ENCODE measurements at regions of chr9 and their contacts with region 1.

Region 1: GRCh38 chr9:137240861-137241489 is at the start of gene TUBB4B:
- DNase-seq: peak; percentile 93 to 100 (median 98)
- ATAC-seq: peak; percentile 79
- H3K4me3 ChIP-seq: peak within 1 kb of the TSS; percentile 68
- H3K4me3 Mint-ChIP-seq: peak within 1 kb of the TSS; percentile 91
- H3K27ac ChIP-seq: peak within 1 kb of the TSS; percentile 64 to 84
- H3K27ac Mint-ChIP-seq: peak within 1 kb of the TSS; percentile 89
- H3K4me1 ChIP-seq: peaks cover 64% of the 10 kb centered on the region
- H3K4me1 Mint-ChIP-seq: peaks cover 17% of the 10 kb centered on the region
- H3K27me3 ChIP-seq: no peaks in the 10 kb centered on the region
- H3K27me3 Mint-ChIP-seq: no peaks in the 10 kb centered on the region
- CTCF ChIP-seq: no peak
- total RNA-seq, gene TUBB4B: 93.8 to 98.2 TPM

Region 2: DNA sequence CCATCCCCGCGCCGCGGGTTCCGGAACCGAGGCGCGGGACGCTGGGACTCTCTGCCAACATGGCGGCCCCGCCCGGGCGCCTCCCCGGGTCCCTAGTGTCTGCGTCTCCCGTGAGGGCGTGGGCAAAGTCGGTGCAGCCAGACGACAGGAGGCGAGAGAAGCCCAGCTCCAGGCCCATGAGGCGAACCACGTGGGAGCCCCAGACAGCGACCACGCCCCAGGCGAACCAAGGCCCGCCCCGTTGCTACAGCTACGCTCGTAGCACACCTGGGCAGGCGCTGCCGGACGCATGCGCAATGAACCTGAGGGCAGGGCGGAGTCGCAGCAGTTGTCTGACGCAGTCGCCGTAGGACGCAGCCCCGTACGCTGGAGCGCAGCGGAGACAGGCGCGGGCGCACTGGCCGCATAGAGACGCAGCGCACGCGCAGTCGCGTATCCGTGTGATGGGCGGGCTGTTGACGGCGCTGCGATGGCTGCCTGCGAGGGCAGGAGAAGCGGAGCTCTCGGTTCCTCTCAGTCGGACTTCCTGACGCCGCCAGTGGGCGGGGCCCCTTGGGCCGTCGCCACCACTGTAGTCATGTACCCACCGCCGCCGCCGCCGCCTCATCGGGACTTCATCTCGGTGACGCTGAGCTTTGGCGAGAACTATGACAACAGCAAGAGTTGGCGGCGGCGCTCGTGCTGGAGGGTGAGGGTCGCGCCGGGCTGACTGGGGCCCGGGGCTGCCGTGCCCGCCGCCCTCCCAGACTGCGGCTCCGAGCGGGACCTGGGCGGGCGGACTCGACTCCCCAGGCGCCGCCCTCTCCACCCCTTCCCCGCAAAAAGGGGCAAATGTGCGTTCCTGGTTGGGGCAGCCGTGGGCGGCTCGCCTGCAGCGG is 154.2 kb before region 1 on chr9 and contains the start of gene MAN1B1:
- CTCF ChIA-PET with region 1: interaction called, 7 read pairs
- POLR2A ChIA-PET with region 1: interaction called, 28 read pairs
- intact Hi-C with region 1: no loop called
- DNase-seq: peak; percentile 98 to 100 (median 100)
- ATAC-seq: peak; percentile 79
- H3K4me3 ChIP-seq: peak within 1 kb of the TSS; percentile 71
- H3K4me3 Mint-ChIP-seq: peak within 1 kb of the TSS; percentile 93
- H3K27ac ChIP-seq: peak within 1 kb of the TSS; percentile 79 to 90
- H3K27ac Mint-ChIP-seq: peak within 1 kb of the TSS; percentile 89
- H3K4me1 ChIP-seq: peaks cover 22% of the 10 kb centered on the region
- H3K4me1 Mint-ChIP-seq: peaks cover 32% of the 10 kb centered on the region
- H3K27me3 ChIP-seq: no peaks in the 10 kb centered on the region
- H3K27me3 Mint-ChIP-seq: no peaks in the 10 kb centered on the region
- CTCF ChIP-seq: no peak
- total RNA-seq, gene MAN1B1: 60.9 to 66.9 TPM

Region 3: DNA sequence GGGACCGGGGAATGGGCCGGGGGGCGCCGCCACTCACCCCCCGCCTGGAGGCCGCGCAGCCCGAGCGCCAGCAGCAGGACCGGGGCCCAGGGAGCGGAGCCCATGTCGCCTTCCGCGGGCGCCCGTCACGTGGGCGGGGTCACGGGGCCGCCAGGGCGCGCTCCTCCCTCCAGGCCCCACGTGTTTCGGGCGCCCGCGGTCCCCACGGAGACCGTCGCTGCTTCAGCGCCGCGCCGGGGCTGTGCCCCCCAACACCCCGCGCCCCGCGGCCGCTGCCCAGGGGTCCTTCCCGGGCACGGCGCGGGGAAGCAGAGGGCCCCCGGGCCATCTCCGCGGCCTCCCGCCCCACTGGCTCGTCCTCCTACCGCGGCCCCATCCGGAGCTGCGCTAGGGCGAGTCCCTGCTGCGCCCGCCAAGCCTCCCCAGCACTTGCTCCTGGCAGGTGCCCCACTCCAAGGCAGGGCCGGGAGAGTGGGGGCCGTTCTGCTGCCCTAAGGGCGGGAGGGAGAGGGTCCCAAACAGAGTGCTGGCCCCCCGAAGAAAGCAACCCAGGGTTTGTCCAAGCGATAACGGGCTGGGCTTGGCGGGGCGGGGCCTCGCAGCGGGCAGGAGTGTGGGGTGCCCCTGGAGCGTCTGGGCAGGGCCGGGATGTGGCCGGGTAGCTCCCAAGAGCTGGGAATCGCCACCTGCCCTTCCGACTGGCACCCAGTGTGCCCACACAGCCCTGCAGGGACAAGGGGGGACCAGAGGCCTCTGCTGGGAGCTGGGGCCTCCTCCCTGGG is 126.2 kb before region 1 on chr9 and contains the start of gene DPP7:
- CTCF ChIA-PET with region 1: interaction called, 7 read pairs
- POLR2A ChIA-PET with region 1: interaction called, 10 read pairs
- intact Hi-C with region 1: loop called in 1 of 2 experiments (anchors 5 kb)
- DNase-seq: peak; percentile 58 to 92 (median 76)
- ATAC-seq: peak; percentile 94
- H3K4me3 ChIP-seq: peak within 1 kb of the TSS; percentile 54
- H3K4me3 Mint-ChIP-seq: peak within 1 kb of the TSS; percentile 79
- H3K27ac ChIP-seq: peak within 1 kb of the TSS in 1 of 2 donors; percentile 46
- H3K27ac Mint-ChIP-seq: peak within 1 kb of the TSS; percentile 44
- H3K4me1 ChIP-seq: peaks cover 28% of the 10 kb centered on the region
- H3K4me1 Mint-ChIP-seq: no peaks in the 10 kb centered on the region
- H3K27me3 ChIP-seq: no peaks in the 10 kb centered on the region
- H3K27me3 Mint-ChIP-seq: no peaks in the 10 kb centered on the region
- CTCF ChIP-seq: no peak
- total RNA-seq, gene DPP7: 344 to 349 TPM

Region 4: DNA sequence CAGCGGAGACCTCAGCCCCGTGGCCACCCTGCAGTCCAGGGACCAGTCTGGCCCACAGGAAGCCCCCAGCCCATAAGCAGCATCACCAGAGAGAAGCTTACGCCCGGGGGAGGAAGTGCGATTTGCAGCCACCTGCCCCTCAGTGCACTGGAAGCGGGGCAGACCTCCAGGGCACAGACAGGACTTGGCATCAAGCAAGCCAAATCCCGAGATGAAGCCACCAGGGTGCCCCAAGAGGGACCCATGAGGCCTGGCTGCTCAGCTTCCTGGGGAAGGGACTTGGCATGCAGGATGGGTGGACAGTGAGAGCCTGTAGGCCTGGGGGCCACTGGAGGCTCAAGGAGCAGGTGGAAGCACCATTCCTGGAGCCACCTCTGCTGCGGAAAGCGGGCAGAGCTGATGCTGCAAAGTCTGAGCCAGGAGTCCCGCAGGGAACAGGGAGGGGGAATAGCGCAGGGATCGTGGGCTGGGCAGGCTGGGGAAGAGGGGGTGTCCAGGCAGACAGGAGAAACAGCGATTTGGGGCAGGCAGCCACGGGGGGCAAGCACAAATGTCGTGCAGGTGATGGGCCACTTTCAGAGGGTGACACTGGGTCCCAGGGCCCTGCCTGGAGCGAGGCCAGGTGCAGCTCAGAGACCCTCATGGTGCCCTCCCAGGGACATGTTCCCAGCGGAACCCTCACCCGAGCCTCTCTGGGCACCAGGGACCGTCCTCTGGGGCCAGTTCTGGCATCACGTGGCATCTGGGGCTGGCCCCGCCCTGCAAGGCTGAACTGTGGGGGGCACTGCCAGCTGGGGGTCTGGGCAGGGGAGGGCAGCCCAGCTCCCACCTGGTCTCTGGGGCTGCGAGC is 74.4 kb before region 1 on chr9:
- CTCF ChIA-PET with region 1: no interaction called
- POLR2A ChIA-PET with region 1: no interaction called
- intact Hi-C with region 1: no loop called
- DNase-seq: no peak
- ATAC-seq: no peak
- H3K4me3 ChIP-seq: no peak overlapping the region
- H3K4me3 Mint-ChIP-seq: peak overlapping the region; percentile 15
- H3K27ac ChIP-seq: no peak overlapping the region
- H3K27ac Mint-ChIP-seq: no peak overlapping the region
- H3K4me1 ChIP-seq: peaks cover 13% of the 10 kb centered on the region
- H3K4me1 Mint-ChIP-seq: no peaks in the 10 kb centered on the region
- H3K27me3 ChIP-seq: peaks cover 59 to 82% of the 10 kb centered on the region in 2 experiments
- H3K27me3 Mint-ChIP-seq: peaks cover 53% of the 10 kb centered on the region
- CTCF ChIP-seq: no peak

Region 5: GRCh38 chr9:137188490-137189296 is 52.3 kb before region 1 on chr9 and contains the starts of genes ANAPC2 and SSNA1:
- CTCF ChIA-PET with region 1: interaction called, 7 read pairs
- POLR2A ChIA-PET with region 1: interaction called, 17 read pairs
- intact Hi-C with region 1: loop called in 1 of 2 experiments (anchors 5 kb)
- DNase-seq: peak; percentile 83 to 98 (median 90)
- ATAC-seq: peak; percentile 79
- H3K4me3 ChIP-seq: peak within 1 kb of the TSS; percentile 100
- H3K4me3 Mint-ChIP-seq: peak within 1 kb of the TSS; percentile 94
- H3K27ac ChIP-seq: peak within 1 kb of the TSS; percentile 86 to 92
- H3K27ac Mint-ChIP-seq: peak within 1 kb of the TSS; percentile 79
- H3K4me1 ChIP-seq: peaks cover 50% of the 10 kb centered on the region
- H3K4me1 Mint-ChIP-seq: peaks cover 29% of the 10 kb centered on the region
- H3K27me3 ChIP-seq: no peaks in the 10 kb centered on the region
- H3K27me3 Mint-ChIP-seq: no peaks in the 10 kb centered on the region
- CTCF ChIP-seq: peak; percentile 48
- total RNA-seq, gene ANAPC2: 144 to 149 TPM
- total RNA-seq, gene SSNA1: 30.1 to 30.5 TPM

Region 6: GRCh38 chr9:137223078-137223970 is 17.7 kb before region 1 on chr9:
- CTCF ChIA-PET with region 1: interaction called, 15 read pairs
- POLR2A ChIA-PET with region 1: interaction called, 29 read pairs
- intact Hi-C with region 1: loop called in 1 of 2 experiments (anchors 1 kb)
- DNase-seq: peak; percentile 94 to 100 (median 98)
- ATAC-seq: peak; percentile 94
- H3K4me3 ChIP-seq: peak overlapping the region; percentile 74
- H3K4me3 Mint-ChIP-seq: peak overlapping the region; percentile 87
- H3K27ac ChIP-seq: peak overlapping the region; percentile 74 to 80
- H3K27ac Mint-ChIP-seq: peak overlapping the region; percentile 81
- H3K4me1 ChIP-seq: peaks cover 36% of the 10 kb centered on the region
- H3K4me1 Mint-ChIP-seq: peaks cover 18% of the 10 kb centered on the region
- H3K27me3 ChIP-seq: peaks cover 0 to 3% of the 10 kb centered on the region in 2 experiments
- H3K27me3 Mint-ChIP-seq: peaks cover 5% of the 10 kb centered on the region
- CTCF ChIP-seq: no peak

Region 7: DNA sequence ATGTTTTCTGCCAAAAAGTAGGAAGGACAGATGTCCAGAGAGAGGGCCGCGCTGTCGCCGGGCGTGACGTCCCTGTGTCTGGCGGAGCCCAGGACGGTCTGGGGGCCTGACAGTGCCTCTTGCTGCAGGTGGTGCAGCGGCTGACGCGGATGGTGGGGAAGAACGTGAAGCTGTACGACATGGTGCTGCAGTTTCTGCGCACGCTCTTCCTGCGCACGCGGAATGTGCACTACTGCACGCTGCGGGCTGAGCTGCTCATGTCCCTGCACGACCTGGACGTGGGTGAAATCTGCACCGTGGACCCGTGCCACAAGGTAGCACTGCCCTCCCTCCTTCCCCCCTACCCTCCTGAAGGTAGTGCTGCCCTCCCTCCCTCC is 21.9 kb after region 1 on chr9:
- CTCF ChIA-PET with region 1: interaction called, 5 read pairs
- POLR2A ChIA-PET with region 1: no interaction called
- intact Hi-C with region 1: loop called in 1 of 2 experiments (anchors 2 kb)
- DNase-seq: peak in 1 of 14 experiments; percentile 25
- ATAC-seq: no peak
- H3K4me3 ChIP-seq: no peak overlapping the region
- H3K4me3 Mint-ChIP-seq: no peak overlapping the region
- H3K27ac ChIP-seq: no peak overlapping the region
- H3K27ac Mint-ChIP-seq: no peak overlapping the region
- H3K4me1 ChIP-seq: no peaks in the 10 kb centered on the region
- H3K4me1 Mint-ChIP-seq: no peaks in the 10 kb centered on the region
- H3K27me3 ChIP-seq: no peaks in the 10 kb centered on the region
- H3K27me3 Mint-ChIP-seq: no peaks in the 10 kb centered on the region
- CTCF ChIP-seq: no peak